Gastrocnemius medialis (tissue), 4 donors: ENCODE measurements at regions of chr2 and their contacts with region 1.

Region 1: GRCh38 chr2:72770879-72771461 is 54.9 kb downstream of the EXOC6B start:
- DNase-seq: peak in 1 of 2 donors; percentile 31
- ATAC-seq: peak; percentile 58 to 85
- H3K4me3 ChIP-seq: no peak overlapping the region
- H3K27ac ChIP-seq: no peak overlapping the region
- H3K4me1 ChIP-seq: no peaks in the 10 kb centered on the region
- H3K27me3 ChIP-seq: no peaks in the 10 kb centered on the region
- CTCF ChIP-seq: peak; percentile 65 to 91 (median 85)
- POLR2A ChIP-seq: no peak

Region 2: GRCh38 chr2:72825241-72826155 is 54.5 kb after region 1 on chr2 and contains the start of gene EXOC6B:
- in situ Hi-C with region 1: no loop called
- intact Hi-C with region 1: loop called (anchors 1 kb)
- DNase-seq: peak; percentile 83 to 84
- ATAC-seq: peak; percentile 92 to 94
- H3K4me3 ChIP-seq: peak within 1 kb of the TSS; percentile 66 to 99 (median 84)
- H3K27ac ChIP-seq: peak within 1 kb of the TSS; percentile 75 to 81 (median 79)
- H3K4me1 ChIP-seq: peaks cover 8 to 20% of the 10 kb centered on the region in 2 donors
- H3K27me3 ChIP-seq: no peaks in the 10 kb centered on the region
- CTCF ChIP-seq: peak in 1 of 5 experiments; percentile 23
- POLR2A ChIP-seq: peak; percentile 64 to 67
- total RNA-seq, gene EXOC6B: 14.6 to 49.6 (median 19.3) TPM

Region 3: GRCh38 chr2:72862239-72862988 is 91.4 kb after region 1 on chr2:
- in situ Hi-C with region 1: loop called in 3 of 4 experiments (anchors 5 kb)
- intact Hi-C with region 1: loop called (anchors 1 kb)
- DNase-seq: peak; percentile 62 to 78
- ATAC-seq: peak; percentile 96 to 99
- H3K4me3 ChIP-seq: peak overlapping the region in 3 of 4 donors; percentile 20 to 37 (median 29)
- H3K27ac ChIP-seq: no peak overlapping the region
- H3K4me1 ChIP-seq: peaks cover 0 to 8% of the 10 kb centered on the region in 2 donors
- H3K27me3 ChIP-seq: peaks cover 4 to 11% (median 8%) of the 10 kb centered on the region in 3 donors
- CTCF ChIP-seq: peak; percentile 81 to 99 (median 88)
- POLR2A ChIP-seq: no peak

Region 4: DNA sequence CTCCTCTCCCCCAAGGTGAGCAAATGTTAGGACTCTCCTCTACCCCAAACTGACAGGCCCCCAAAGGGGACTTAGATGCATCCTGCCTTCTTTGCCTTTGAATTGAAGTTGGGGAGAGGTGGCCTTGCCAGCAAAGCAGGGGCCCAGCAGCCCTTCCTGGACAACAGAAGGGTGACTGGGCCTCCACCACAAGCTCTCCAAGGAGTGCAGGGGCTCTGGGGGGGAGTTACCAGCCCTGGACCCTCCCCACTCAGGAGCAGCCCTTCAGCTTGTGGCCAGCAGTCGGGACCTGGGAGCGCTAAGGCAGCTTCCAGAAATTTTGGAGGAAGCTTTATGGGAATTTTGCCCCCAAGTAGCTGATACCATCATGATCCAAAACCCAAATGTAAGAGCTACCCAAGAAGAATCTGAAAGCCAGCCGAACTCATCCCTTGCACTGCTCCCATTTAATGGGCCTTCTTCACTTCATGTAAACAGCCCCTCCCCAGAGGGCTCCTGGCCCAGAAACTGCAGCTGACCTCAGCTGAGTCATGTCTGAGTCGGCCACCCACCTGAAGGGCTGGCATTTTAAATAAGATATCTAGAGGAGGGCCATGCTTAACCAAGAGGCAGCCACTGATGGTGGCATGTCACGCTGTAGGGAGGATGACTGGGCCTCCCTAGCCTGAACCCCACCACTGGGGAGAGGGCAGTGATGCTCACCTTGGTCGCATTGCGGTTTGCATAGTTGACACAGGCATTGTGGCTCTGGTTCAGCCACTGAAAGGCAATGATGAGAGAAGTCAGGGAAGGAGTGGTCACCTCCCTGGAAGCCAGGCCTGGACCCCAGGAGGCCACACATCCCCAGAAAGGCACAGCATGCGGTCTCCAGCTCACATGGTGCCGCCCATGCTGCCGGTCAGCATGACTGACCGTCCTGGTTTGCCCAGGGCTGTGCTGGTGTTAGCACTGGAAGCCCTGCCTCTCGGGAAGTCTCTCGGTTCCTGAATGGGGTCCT is 229.1 kb after region 1 on chr2:
- in situ Hi-C with region 1: no loop called
- intact Hi-C with region 1: no loop called
- DNase-seq: no peak
- ATAC-seq: no peak
- H3K4me3 ChIP-seq: no peak overlapping the region
- H3K27ac ChIP-seq: no peak overlapping the region
- H3K4me1 ChIP-seq: no peaks in the 10 kb centered on the region
- H3K27me3 ChIP-seq: no peaks in the 10 kb centered on the region
- CTCF ChIP-seq: no peak
- POLR2A ChIP-seq: no peak